ENCODE measurements at regions of chr3 and their contacts with region 1.

Region 1: GRCh38 chr3:156174229-156174847 is 54.0 kb downstream of the KCNAB1 start:
- DNase-seq: peak; percentile 74
- H3K4me3 ChIP-seq: no peak overlapping the region
- H3K27ac ChIP-seq: no peak overlapping the region
- H3K4me1 ChIP-seq: no peaks in the 10 kb centered on the region
- H3K27me3 ChIP-seq: no peaks in the 10 kb centered on the region
- CTCF ChIP-seq: peak; percentile 32 to 45
- POLR2A ChIP-seq: no peak

Region 2: GRCh38 chr3:156160647-156161046 is 13.7 kb before region 1 on chr3:
- CTCF ChIA-PET with region 1: interaction called, 17 read pairs
- POLR2A ChIA-PET with region 1: no interaction called
- dilution Hi-C with region 1: no loop called
- intact Hi-C with region 1: no loop called
- DNase-seq: peak; percentile 28
- H3K4me3 ChIP-seq: no peak overlapping the region
- H3K27ac ChIP-seq: no peak overlapping the region
- H3K4me1 ChIP-seq: peaks cover 7% of the 10 kb centered on the region
- H3K27me3 ChIP-seq: no peaks in the 10 kb centered on the region
- CTCF ChIP-seq: no peak
- POLR2A ChIP-seq: no peak

Region 3: GRCh38 chr3:156217674-156218352 is 43.5 kb after region 1 on chr3:
- CTCF ChIA-PET with region 1: interaction called, 10 read pairs
- POLR2A ChIA-PET with region 1: no interaction called
- dilution Hi-C with region 1: no loop called
- intact Hi-C with region 1: no loop called
- DNase-seq: no peak
- H3K4me3 ChIP-seq: no peak overlapping the region
- H3K27ac ChIP-seq: no peak overlapping the region
- H3K4me1 ChIP-seq: no peaks in the 10 kb centered on the region
- H3K27me3 ChIP-seq: no peaks in the 10 kb centered on the region
- CTCF ChIP-seq: no peak
- POLR2A ChIP-seq: no peak

Region 4: GRCh38 chr3:156373095-156373494 is 198.8 kb after region 1 on chr3:
- CTCF ChIA-PET with region 1: interaction called, 424 read pairs
- POLR2A ChIA-PET with region 1: no interaction called
- dilution Hi-C with region 1: no loop called
- intact Hi-C with region 1: no loop called
- DNase-seq: no peak
- H3K4me3 ChIP-seq: no peak overlapping the region
- H3K27ac ChIP-seq: no peak overlapping the region
- H3K4me1 ChIP-seq: no peaks in the 10 kb centered on the region
- H3K27me3 ChIP-seq: no peaks in the 10 kb centered on the region
- CTCF ChIP-seq: no peak
- POLR2A ChIP-seq: no peak

Region 5: DNA sequence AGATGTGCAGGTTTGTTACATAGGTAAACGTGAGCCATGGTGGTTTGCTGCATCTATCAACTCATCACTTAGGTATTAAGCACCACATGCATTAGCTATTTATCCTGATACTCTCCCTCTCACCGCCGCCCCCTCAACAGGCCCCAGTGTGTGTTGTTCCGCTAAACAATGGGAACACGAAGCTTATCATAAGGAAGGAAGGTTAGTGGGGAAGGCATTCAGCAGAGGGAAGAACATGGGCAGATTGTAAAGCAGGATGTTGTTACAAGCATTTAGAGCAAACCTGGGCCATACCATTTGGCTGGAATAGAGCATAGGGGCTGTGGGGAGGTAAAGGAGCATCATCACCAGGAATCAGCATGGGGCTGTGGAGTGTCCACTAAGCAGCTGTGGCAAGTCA is 268.7 kb after region 1 on chr3:
- CTCF ChIA-PET with region 1: interaction called, 12 read pairs
- POLR2A ChIA-PET with region 1: no interaction called
- dilution Hi-C with region 1: no loop called
- intact Hi-C with region 1: no loop called
- DNase-seq: peak; percentile 81
- H3K4me3 ChIP-seq: no peak overlapping the region
- H3K27ac ChIP-seq: no peak overlapping the region
- H3K4me1 ChIP-seq: peaks cover 8% of the 10 kb centered on the region
- H3K27me3 ChIP-seq: no peaks in the 10 kb centered on the region
- CTCF ChIP-seq: no peak
- POLR2A ChIP-seq: no peak

Region 6: GRCh38 chr3:156489462-156489911 is 315.1 kb after region 1 on chr3:
- CTCF ChIA-PET with region 1: interaction called, 19 read pairs
- POLR2A ChIA-PET with region 1: no interaction called
- dilution Hi-C with region 1: no loop called
- intact Hi-C with region 1: no loop called
- DNase-seq: peak; percentile 85
- H3K4me3 ChIP-seq: no peak overlapping the region
- H3K27ac ChIP-seq: peak overlapping the region; percentile 74
- H3K4me1 ChIP-seq: peaks cover 31% of the 10 kb centered on the region
- H3K27me3 ChIP-seq: no peaks in the 10 kb centered on the region
- CTCF ChIP-seq: no peak
- POLR2A ChIP-seq: no peak

Measured in endothelial cell of umbilical vein (primary cell).